Activated T-helper 2 cell treated with anti-CD3 and anti-CD28 coated beads, Interferon-gamma antibody, Interleukin-2, Interleukin-4, amounts not matched to agents 10 μg/mL and 5 μg/mL and 100 μg/mL, durations not matched to agents 14 hours and 24 hours and 36 hours (primary cell): ENCODE measurements at regions of chr10 and their contacts with region 1.

Region 1: GRCh38 chr10:9228771-9229170 is 1174.3 kb downstream of the GATA3 start:
- DNase-seq: no peak
- H3K4me3 Mint-ChIP-seq: no peak overlapping the region
- H3K27ac Mint-ChIP-seq: no peak overlapping the region
- H3K4me1 Mint-ChIP-seq: peaks cover 41% of the 10 kb centered on the region
- H3K27me3 Mint-ChIP-seq: peaks cover 7% of the 10 kb centered on the region

Region 2: GRCh38 chr10:9294865-9295264 is 66.1 kb after region 1 on chr10:
- intact Hi-C with region 1: loop called (anchors 1 kb)
- DNase-seq: no peak
- H3K4me3 Mint-ChIP-seq: no peak overlapping the region
- H3K27ac Mint-ChIP-seq: peak overlapping the region; percentile 71
- H3K4me1 Mint-ChIP-seq: peaks cover 27% of the 10 kb centered on the region
- H3K27me3 Mint-ChIP-seq: peaks cover 2% of the 10 kb centered on the region